Heart right ventricle (tissue), 16 donors: ENCODE measurements at regions of chr10 and their contacts with region 1.

Region 1: GRCh38 chr10:13382703-13383398 is 34.8 kb upstream of the SEPHS1 start:
- DNase-seq: no peak
- ATAC-seq: peak in 3 of 8 donors; percentile 13 to 38 (median 35)
- H3K4me3 ChIP-seq: peak overlapping the region in 8 of 10 donors; percentile 10 to 41 (median 26)
- H3K27ac ChIP-seq: no peak overlapping the region
- H3K4me1 ChIP-seq: peaks cover 0 to 15% (median 10%) of the 10 kb centered on the region in 9 donors
- H3K27me3 ChIP-seq: peaks cover 0 to 50% (median 35%) of the 10 kb centered on the region in 7 donors
- CTCF ChIP-seq: no peak

Region 2: GRCh38 chr10:13404305-13404759 is 21.5 kb after region 1 on chr10:
- intact Hi-C with region 1: no loop called
- DNase-seq: no peak
- ATAC-seq: no peak
- H3K4me3 ChIP-seq: no peak overlapping the region
- H3K27ac ChIP-seq: no peak overlapping the region
- H3K4me1 ChIP-seq: no peaks in the 10 kb centered on the region
- H3K27me3 ChIP-seq: peaks cover 0 to 16% (median 0%) of the 10 kb centered on the region in 7 donors
- CTCF ChIP-seq: no peak

Region 3: GRCh38 chr10:13420532-13421307 is 37.9 kb after region 1 on chr10:
- intact Hi-C with region 1: loop called in 1 of 10 experiments (anchors 1 kb)
- DNase-seq: no peak
- ATAC-seq: no peak
- H3K4me3 ChIP-seq: no peak overlapping the region
- H3K27ac ChIP-seq: no peak overlapping the region
- H3K4me1 ChIP-seq: no peaks in the 10 kb centered on the region
- H3K27me3 ChIP-seq: peaks cover 0 to 7% (median 0%) of the 10 kb centered on the region in 7 donors
- CTCF ChIP-seq: no peak

Region 4: DNA sequence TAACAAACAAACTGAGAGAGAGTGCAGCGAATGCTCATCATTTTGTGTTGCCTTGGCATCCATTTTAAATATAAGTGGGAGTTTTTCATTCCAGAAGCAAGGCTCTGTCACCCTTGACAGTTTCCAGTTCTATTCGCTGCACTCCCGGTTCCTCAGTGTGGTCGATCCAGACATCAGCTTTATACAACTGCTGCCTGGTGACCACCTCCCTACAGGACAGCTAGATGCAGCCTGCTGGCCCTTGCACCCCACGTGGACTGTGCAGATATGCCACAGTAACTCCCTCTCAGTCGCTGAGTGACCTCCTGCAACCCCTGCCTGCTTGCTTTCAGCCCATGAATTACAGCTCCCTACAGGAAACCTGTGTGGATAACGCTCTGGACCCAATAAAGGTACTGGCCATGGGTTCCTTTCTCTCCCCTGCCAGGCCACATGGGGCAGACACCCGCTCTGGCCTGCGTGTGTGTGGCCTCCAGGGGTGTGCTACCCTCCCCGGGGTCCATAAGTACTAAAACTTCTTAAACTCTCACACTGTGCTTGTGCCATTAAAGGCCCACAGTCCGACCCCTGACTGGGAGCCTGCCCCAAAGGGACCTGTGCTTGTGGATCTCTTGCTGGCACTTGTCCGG is 122.3 kb after region 1 on chr10:
- intact Hi-C with region 1: loop called in 1 of 10 experiments (anchors 5 kb)
- DNase-seq: no peak
- ATAC-seq: peak in 1 of 8 donors; percentile 41
- H3K4me3 ChIP-seq: no peak overlapping the region
- H3K27ac ChIP-seq: no peak overlapping the region
- H3K4me1 ChIP-seq: peaks cover 0 to 18% (median 5%) of the 10 kb centered on the region in 9 donors
- H3K27me3 ChIP-seq: no peaks in the 10 kb centered on the region
- CTCF ChIP-seq: no peak